T-cell (primary cell): ENCODE measurements at regions of chr2 and their contacts with region 1.

Region 1: DNA sequence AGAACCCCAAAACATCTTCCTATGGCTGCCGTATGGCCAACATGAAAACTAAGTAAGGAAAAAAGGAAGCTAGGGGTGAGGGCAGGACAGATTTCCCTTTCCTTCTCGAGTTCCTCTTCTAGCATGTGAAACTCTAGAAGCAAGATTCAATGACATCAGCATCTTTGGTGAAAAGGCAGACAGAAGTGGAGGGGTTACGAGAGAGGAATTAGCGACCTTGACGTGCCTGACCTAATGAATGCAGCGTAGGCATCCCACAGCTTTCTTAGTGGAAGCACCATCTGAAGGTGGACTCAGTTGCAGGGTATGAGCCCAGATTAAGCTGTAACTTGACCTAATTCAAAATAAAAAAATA is 47.9 kb upstream of the PELI1 start:
- DNase-seq: no peak
- ATAC-seq: no peak
- H3K4me3 ChIP-seq: no peak overlapping the region
- H3K4me3 Mint-ChIP-seq: no peak overlapping the region
- H3K27ac ChIP-seq: no peak overlapping the region
- H3K27ac Mint-ChIP-seq: no peak overlapping the region
- H3K4me1 ChIP-seq: peaks cover 0 to 2% of the 10 kb centered on the region in 2 experiments
- H3K4me1 Mint-ChIP-seq: peaks cover 20 to 35% (median 28%) of the 10 kb centered on the region in 3 donors
- H3K27me3 ChIP-seq: no peaks in the 10 kb centered on the region
- H3K27me3 Mint-ChIP-seq: no peaks in the 10 kb centered on the region

Region 2: GRCh38 chr2:64157792-64158191 is 34.3 kb before region 1 on chr2:
- CTCF ChIA-PET with region 1: interaction called in 1 of 2 experiments, 6 read pairs
- POLR2A ChIA-PET with region 1: interaction called in 1 of 2 experiments, 10 read pairs
- DNase-seq: no peak
- ATAC-seq: no peak
- H3K4me3 ChIP-seq: no peak overlapping the region
- H3K4me3 Mint-ChIP-seq: no peak overlapping the region
- H3K27ac ChIP-seq: no peak overlapping the region
- H3K27ac Mint-ChIP-seq: no peak overlapping the region
- H3K4me1 ChIP-seq: no peaks in the 10 kb centered on the region
- H3K4me1 Mint-ChIP-seq: no peaks in the 10 kb centered on the region
- H3K27me3 ChIP-seq: no peaks in the 10 kb centered on the region
- H3K27me3 Mint-ChIP-seq: peaks cover 0 to 2% of the 10 kb centered on the region in 2 donors